Activated B cell treated with CpG ODN at 0.5 μM for 24 hours (primary cell): ENCODE measurements at regions of chr21 and their contacts with region 1.

Region 1: GRCh38 chr21:41663801-41664788 is 102.8 kb downstream of the RIPK4 start:
- DNase-seq: no peak
- ATAC-seq: no peak
- H3K4me3 Mint-ChIP-seq: no peak overlapping the region
- H3K27ac Mint-ChIP-seq: no peak overlapping the region
- H3K4me1 Mint-ChIP-seq: no peaks in the 10 kb centered on the region
- H3K27me3 Mint-ChIP-seq: peaks cover 8% of the 10 kb centered on the region
- CTCF ChIP-seq: no peak

Region 2: GRCh38 chr21:41548781-41549180 is 115.3 kb before region 1 on chr21:
- CTCF ChIA-PET with region 1: no interaction called
- POLR2A ChIA-PET with region 1: no interaction called
- intact Hi-C with region 1: loop called (anchors 10 kb)
- DNase-seq: no peak
- ATAC-seq: no peak
- H3K4me3 Mint-ChIP-seq: no peak overlapping the region
- H3K27ac Mint-ChIP-seq: no peak overlapping the region
- H3K4me1 Mint-ChIP-seq: peaks cover 8% of the 10 kb centered on the region
- H3K27me3 Mint-ChIP-seq: peaks cover 4% of the 10 kb centered on the region
- CTCF ChIP-seq: no peak

Region 3: GRCh38 chr21:41768437-41769061 is 104.5 kb after region 1 on chr21:
- CTCF ChIA-PET with region 1: no interaction called
- POLR2A ChIA-PET with region 1: no interaction called
- intact Hi-C with region 1: no loop called
- DNase-seq: no peak
- ATAC-seq: no peak
- H3K4me3 Mint-ChIP-seq: peak overlapping the region; percentile 74
- H3K27ac Mint-ChIP-seq: no peak overlapping the region
- H3K4me1 Mint-ChIP-seq: peaks cover 22% of the 10 kb centered on the region
- H3K27me3 Mint-ChIP-seq: peaks cover 79% of the 10 kb centered on the region
- CTCF ChIP-seq: no peak